ENCODE measurements at regions of chr15 and their contacts with region 1.

Region 1: DNA sequence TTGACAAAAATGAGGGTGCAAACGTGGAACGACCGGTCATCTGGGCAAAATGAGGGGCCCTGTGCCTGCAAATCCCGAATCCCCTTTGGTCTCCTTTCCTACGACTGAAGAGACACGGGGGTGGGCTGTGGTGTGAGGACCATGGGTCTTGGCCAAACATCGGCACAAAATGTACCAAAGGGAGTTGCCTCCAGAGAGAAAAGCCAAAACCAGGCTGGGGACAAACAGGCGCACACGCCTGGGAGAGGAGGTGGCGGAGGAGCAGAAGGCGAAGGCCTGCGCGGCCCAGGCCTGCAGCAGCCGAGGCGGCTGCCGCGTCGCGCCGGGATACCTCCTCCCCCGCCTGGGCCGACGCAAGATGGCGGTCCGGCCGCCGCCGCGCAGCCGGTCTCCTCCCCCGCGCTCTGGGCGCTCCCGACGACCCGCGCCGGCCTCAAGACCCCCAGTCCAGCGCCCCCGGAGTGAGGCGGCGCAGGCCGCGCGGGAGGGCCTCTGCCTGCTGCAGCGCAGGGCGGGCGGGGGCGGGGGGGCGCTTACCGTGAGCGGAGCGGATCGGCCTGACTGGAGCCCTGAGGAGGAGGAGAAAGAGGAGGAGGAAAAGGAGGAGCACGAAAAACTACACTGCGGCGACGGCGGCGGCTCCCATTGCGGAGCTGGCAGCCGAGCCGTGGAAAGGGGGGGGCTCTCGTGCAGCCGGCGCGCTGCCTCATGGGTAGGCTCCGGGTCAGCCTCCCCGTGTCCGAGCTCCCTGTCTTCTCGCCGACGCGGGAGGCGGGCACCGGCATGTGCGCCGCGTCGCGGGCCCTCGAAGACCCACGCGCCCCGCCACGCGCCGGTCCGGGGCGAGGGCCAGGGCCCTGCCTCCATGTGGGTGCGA is at the start of gene ZNF280D:
- DNase-seq: peak; percentile 72 to 96 (median 89)

Region 2: GRCh38 chr15:56619887-56620286 is 113.3 kb before region 1 on chr15:
- intact Hi-C with region 1: no loop called
- DNase-seq: no peak

Region 3: DNA sequence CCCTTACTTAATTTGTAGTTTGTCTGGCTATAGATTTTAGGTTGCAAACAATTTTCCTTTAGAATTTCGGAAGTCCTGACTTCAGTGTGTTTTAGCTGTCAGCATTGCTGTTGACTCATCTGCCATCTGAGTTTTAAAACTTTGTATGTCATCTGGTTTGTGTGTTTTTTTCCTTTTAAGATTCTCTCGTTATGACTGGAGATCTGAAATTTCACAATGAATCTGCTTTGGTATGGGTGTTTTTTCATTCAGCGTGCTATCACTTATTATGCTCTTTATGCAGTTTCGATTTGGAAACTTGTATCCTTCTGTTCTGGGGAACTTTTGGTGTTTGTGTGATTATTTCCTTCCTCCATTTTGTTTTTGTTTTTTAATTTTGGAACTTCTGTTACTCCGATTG is 53.8 kb after region 1 on chr15:
- intact Hi-C with region 1: no loop called
- DNase-seq: no peak

Region 4: GRCh38 chr15:56798639-56799038 is 65.5 kb after region 1 on chr15:
- intact Hi-C with region 1: no loop called
- DNase-seq: no peak

Region 5: DNA sequence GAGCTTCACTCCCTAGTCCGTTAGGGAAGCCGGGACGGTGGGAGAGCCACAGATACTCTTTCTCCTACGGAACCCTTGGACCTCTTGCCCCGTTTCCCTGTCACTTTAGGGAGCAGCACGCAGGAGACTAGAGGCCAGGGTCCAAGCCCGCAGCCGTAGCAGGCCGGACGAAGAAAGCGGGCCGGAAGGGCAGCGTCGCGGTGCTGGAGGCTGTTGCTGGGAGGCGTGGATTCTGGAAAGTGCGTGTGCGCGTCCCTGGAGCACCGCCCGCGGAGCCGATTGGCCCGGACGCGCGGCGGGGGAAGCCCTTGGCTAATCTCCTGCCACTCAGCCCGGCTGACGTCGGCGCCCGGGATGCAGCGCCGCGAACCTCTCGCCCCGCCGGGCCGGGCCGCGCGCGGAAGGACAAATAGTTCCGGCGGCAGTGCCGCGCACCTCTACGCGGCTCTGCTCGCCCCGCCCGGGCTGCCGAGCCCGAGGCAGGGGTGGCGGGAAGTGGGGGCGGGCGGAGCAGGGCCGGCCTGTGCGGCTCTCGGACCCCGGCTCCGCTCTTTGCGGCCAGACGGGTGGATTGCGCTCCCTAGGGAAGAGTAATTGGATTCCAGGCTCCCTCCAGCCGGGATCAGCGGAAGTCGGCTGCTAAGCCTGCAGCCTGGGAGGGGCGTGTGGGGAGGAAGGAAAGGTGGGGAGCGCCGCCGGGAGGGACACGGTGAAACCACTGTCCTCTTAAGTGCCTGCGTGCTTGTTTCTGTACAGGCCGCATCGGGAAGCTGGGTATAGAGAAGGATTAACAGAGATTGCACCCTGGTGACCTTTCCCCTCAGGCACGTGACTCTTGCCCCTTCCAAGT is 154.0 kb after region 1 on chr15:
- intact Hi-C with region 1: loop called (anchors 2 kb)
- DNase-seq: peak; percentile 80 to 98 (median 95)

Measured in head of caudate nucleus (tissue), 42 donors.